Spleen (tissue), 13 donors: ENCODE measurements at regions of chr12 and their contacts with region 1.

Region 1: GRCh38 chr12:76348079-76348901 is at the start of gene BBS10:
- DNase-seq: peak; percentile 97
- H3K4me3 ChIP-seq: peak within 1 kb of the TSS; percentile 51 to 87 (median 70)
- H3K27ac ChIP-seq: peak within 1 kb of the TSS; percentile 81 to 93 (median 90)
- H3K4me1 ChIP-seq: peaks cover 4 to 39% (median 27%) of the 10 kb centered on the region in 6 donors
- H3K27me3 ChIP-seq: no peaks in the 10 kb centered on the region
- CTCF ChIP-seq: peak; percentile 6 to 63 (median 35)
- POLR2A ChIP-seq: peak in 1 of 3 donors; percentile 34
- total RNA-seq, gene BBS10: 6.7 to 15.0 (median 11.8) TPM

Region 2: DNA sequence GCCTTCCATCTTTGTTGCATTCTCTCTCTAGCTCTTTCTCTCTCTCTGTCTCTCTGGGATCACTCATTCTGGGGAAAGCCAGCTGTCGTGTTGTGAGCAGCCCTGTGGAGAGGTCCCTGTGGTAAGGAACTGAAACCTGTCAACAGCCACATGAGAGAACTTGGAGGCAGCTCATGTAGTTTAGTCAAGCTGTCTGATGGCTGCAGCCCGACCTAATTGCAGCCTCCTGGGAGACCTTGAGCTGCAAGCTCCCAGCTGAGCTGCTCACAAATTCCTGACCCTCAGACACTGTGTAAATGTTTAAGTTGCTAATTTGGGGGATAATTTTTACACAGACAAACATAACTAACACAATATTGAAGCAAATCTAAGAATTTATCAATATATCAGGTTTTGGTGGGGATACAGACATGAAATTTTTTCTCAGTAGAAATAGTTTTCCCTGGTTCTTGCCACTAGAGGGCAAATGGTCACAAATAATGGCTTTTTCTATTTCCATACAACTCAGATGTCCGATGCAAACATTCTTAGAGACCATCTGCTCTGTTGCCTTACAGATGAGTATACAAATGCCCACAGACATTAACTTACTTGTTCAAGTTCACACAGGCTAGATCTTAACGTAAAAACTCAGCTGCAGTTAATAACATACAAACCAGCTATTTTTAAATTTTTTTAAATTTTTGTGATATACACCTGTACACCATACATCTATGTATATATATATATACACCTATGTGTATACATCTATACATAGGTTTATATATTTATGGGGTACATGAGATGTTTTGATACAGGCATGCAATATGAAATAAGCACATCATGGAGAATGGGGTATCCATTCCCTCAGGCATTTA is 821.4 kb before region 1 on chr12:
- intact Hi-C with region 1: loop called (anchors 10 kb)
- DNase-seq: no peak
- H3K4me3 ChIP-seq: no peak overlapping the region
- H3K27ac ChIP-seq: no peak overlapping the region
- H3K4me1 ChIP-seq: peaks cover 0 to 9% (median 7%) of the 10 kb centered on the region in 6 donors
- H3K27me3 ChIP-seq: peaks cover 0 to 4% (median 0%) of the 10 kb centered on the region in 7 donors
- CTCF ChIP-seq: peak in 10 of 11 experiments; percentile 30 to 71 (median 64)
- POLR2A ChIP-seq: no peak

Region 3: GRCh38 chr12:76083904-76084862 is 264.1 kb before region 1 on chr12 and contains the start of gene NAP1L1:
- intact Hi-C with region 1: loop called (anchors 10 kb)
- DNase-seq: peak; percentile 99
- H3K4me3 ChIP-seq: peak within 1 kb of the TSS; percentile 70 to 93 (median 87)
- H3K27ac ChIP-seq: peak within 1 kb of the TSS; percentile 94 to 99 (median 98)
- H3K4me1 ChIP-seq: peaks cover 14 to 69% (median 56%) of the 10 kb centered on the region in 6 donors
- H3K27me3 ChIP-seq: no peaks in the 10 kb centered on the region
- CTCF ChIP-seq: no peak
- POLR2A ChIP-seq: peak in 2 of 3 donors; percentile 79 to 96
- total RNA-seq, gene NAP1L1: 353 to 460 (median 404) TPM

Region 4: GRCh38 chr12:76611533-76611932 is 263.2 kb after region 1 on chr12:
- intact Hi-C with region 1: no loop called
- DNase-seq: no peak
- H3K4me3 ChIP-seq: no peak overlapping the region
- H3K27ac ChIP-seq: peak overlapping the region in 2 of 8 donors; percentile 43 to 57
- H3K4me1 ChIP-seq: no peaks in the 10 kb centered on the region
- H3K27me3 ChIP-seq: no peaks in the 10 kb centered on the region
- CTCF ChIP-seq: no peak
- POLR2A ChIP-seq: no peak